Psoas muscle (tissue), 8 donors: ENCODE measurements at regions of chr3 and their contacts with region 1.

Region 1: DNA sequence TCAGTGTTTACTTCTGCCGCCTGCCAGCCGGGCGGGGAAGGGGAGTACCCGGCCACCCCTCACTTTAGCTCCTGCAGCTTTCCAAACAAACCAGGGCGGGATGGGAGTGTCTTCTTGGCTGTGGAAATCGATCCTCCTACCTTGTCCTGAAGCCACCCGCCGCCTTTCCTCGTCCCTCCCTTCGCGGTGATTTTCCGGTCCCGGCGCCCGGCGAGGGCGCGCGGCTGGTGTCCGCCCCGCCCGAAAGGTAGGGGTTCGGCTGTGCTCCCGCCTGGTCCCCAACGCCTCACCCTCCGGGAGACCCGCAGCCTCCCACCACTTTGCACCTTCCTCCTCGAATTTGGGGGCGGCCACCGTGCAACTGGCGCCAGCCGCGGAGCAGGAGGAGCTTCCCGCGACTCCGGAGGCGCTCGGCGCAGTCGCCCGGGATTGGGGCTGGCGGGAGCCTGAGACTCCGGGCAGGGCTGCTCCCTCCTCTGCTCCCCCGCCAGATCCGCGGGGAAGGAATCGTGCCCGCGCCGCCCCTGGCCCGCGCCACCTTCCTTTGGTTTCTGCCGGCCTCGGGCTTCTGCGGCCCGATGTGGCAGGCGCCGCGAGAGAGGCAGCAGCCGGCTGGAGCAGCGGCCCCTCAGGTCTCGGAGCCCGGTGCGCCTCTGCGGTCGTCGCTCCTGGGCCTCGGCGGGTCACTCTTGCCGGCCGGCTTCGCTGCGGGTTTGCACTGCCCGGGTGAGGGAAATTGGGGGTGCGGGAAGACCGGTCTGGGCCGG is 30.7 kb upstream of the ST3GAL6 start:
- DNase-seq: peak; percentile 46 to 68
- ATAC-seq: peak; percentile 71 to 84 (median 79)
- H3K4me3 ChIP-seq: peak overlapping the region; percentile 93
- H3K27ac ChIP-seq: peak overlapping the region; percentile 86
- H3K4me1 ChIP-seq: peaks cover 9% of the 10 kb centered on the region
- H3K27me3 ChIP-seq: no peaks in the 10 kb centered on the region
- CTCF ChIP-seq: no peak

Region 2: DNA sequence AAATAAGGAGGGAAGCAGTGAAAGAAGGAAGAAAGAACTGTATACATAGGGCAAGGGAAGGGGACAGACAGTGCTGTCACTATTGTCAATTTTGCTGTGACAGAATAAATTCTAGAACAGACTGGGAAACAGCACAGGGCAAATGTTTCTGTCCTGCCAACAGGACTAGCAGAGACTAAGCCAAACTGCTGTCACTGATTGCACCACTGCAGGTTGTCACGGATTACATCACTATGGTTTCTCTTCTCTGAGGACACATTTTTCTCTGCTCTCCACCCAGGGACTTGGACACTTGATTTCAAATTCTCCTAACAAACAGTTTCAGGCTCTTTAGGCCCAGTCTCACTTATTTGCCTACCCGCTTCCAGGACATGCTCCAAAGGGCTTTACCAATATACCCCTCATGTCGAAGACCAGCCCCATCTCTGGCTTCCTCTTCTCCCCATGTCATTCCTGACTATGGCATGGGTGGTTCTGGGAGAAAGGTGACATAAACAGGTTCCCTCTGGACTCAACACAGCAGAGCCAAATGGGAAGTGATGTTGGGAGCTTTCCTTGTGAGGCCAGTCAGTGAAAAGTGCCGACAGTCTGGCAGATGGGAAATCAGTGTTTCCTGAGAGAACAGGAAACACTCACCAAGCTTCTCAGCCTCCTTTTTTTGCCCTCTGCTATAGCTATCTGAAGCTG is 39.5 kb before region 1 on chr3:
- intact Hi-C with region 1: loop called in 1 of 2 experiments (anchors 5 kb)
- DNase-seq: peak in 1 of 2 donors; percentile 33
- ATAC-seq: peak in 3 of 4 donors; percentile 67 to 85 (median 75)
- H3K4me3 ChIP-seq: no peak overlapping the region
- H3K27ac ChIP-seq: peak overlapping the region; percentile 60
- H3K4me1 ChIP-seq: no peaks in the 10 kb centered on the region
- H3K27me3 ChIP-seq: no peaks in the 10 kb centered on the region
- CTCF ChIP-seq: no peak

Region 3: GRCh38 chr3:98770261-98771039 is 38.0 kb after region 1 on chr3:
- intact Hi-C with region 1: loop called in 1 of 2 experiments (anchors 5 kb)
- DNase-seq: peak in 1 of 2 donors; percentile 26
- ATAC-seq: peak; percentile 54 to 81 (median 76)
- H3K4me3 ChIP-seq: no peak overlapping the region
- H3K27ac ChIP-seq: peak overlapping the region; percentile 59
- H3K4me1 ChIP-seq: peaks cover 49% of the 10 kb centered on the region
- H3K27me3 ChIP-seq: no peaks in the 10 kb centered on the region
- CTCF ChIP-seq: no peak

Region 4: DNA sequence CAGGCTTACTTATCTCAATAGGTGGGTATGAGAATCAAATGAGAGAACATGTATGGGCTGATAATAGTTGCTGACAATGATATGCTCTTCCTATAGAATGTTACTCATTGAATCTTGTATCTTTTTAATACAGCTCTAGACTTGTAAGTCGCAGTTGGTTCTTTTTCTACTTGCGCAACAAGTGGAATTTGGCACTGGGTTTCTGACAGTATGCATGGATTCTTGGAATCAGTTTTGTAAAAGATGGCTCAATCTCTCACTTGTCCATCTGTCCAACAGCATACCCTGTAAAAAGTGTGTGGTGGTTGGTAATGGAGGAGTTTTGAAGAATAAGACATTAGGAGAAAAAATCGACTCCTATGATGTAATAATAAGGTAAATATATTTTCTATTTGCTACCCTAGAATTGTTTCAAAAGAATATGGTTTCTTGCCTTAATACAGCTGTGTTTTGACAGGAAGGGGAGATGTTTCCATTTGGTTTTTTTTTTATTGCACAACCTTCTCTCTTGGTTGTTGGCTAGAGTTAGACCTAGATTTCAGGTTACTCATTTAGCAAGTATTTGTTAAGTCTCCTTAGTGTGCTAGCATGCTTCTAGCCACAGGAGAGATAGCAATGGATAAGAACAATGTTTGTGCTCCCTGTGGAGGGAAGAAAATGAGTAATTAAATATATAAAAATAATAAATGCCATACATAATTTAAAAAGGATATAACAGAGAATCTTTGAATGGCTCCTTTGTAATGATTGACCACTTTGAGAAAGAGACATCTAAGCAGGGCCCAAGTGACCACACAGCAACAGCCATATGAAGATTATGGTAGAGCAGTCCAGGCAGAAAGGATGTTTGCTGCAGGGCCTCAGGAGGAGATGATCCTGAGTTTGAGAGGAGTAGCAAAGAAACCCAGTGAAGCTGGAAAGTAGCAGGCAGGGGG is 52.5 kb after region 1 on chr3:
- intact Hi-C with region 1: loop called in 1 of 2 experiments (anchors 10 kb)
- DNase-seq: no peak
- ATAC-seq: peak; percentile 72 to 87 (median 80)
- H3K4me3 ChIP-seq: no peak overlapping the region
- H3K27ac ChIP-seq: peak overlapping the region; percentile 43
- H3K4me1 ChIP-seq: peaks cover 37% of the 10 kb centered on the region
- H3K27me3 ChIP-seq: no peaks in the 10 kb centered on the region
- CTCF ChIP-seq: no peak

Region 5: DNA sequence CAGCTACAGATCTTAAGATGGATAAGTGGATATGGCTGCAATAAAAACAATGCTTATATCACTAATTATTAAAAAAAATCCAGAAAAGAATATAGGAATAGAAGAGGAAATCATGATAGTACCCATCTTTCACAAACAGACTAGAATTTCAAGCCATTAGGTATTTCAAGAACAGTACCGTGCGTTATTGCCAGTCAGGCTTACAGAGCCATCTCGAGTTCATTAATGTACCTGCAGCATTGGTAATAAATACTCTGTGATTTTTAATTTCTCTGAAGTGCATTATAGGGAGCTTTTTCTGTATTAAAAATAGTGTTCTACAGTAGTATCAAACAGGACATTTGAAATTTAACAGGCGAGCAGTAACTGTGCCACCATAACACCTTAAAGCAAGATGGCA is 66.4 kb after region 1 on chr3:
- intact Hi-C with region 1: loop called in 1 of 2 experiments (anchors 5 kb)
- DNase-seq: no peak
- ATAC-seq: peak in 3 of 4 donors; percentile 49 to 77 (median 57)
- H3K4me3 ChIP-seq: no peak overlapping the region
- H3K27ac ChIP-seq: no peak overlapping the region
- H3K4me1 ChIP-seq: no peaks in the 10 kb centered on the region
- H3K27me3 ChIP-seq: no peaks in the 10 kb centered on the region
- CTCF ChIP-seq: peak; percentile 41